Posterior vena cava (tissue), 2 donors: ENCODE measurements at regions of chr6 and their contacts with region 1.

Region 1: DNA sequence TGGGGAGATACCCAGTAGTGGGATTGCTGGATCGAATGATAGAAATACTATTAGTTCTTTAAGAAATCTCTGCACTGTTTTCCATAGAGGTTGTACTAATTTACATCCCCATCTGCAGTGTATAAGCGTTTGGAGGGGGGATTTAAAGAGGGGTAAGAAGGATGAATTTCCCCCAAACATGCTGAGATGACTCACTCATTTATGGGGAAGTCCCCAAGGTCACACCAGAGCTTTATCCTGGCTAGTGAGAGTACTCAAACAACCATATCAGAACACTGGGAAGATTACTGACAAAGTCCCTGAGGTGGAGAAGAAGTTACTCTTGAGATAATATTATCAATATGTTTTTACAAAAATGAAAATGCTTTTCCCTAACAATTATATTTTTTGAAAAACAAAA is 44.0 kb downstream of the ROS1 start:
- DNase-seq: no peak

Region 2: GRCh38 chr6:117326396-117326795 is 55.4 kb before region 1 on chr6:
- intact Hi-C with region 1: loop called in 1 of 2 experiments (anchors 2 kb)
- DNase-seq: no peak